ENCODE measurements at regions of chr3 and their contacts with region 1.

Region 1: GRCh38 chr3:183381179-183381578 is 47.2 kb downstream of the MCF2L2 start:
- DNase-seq: no peak
- H3K4me3 ChIP-seq: no peak overlapping the region
- H3K27ac ChIP-seq: no peak overlapping the region
- H3K4me1 ChIP-seq: no peaks in the 10 kb centered on the region
- H3K27me3 ChIP-seq: peaks cover 10% of the 10 kb centered on the region
- CTCF ChIP-seq: no peak

Region 2: DNA sequence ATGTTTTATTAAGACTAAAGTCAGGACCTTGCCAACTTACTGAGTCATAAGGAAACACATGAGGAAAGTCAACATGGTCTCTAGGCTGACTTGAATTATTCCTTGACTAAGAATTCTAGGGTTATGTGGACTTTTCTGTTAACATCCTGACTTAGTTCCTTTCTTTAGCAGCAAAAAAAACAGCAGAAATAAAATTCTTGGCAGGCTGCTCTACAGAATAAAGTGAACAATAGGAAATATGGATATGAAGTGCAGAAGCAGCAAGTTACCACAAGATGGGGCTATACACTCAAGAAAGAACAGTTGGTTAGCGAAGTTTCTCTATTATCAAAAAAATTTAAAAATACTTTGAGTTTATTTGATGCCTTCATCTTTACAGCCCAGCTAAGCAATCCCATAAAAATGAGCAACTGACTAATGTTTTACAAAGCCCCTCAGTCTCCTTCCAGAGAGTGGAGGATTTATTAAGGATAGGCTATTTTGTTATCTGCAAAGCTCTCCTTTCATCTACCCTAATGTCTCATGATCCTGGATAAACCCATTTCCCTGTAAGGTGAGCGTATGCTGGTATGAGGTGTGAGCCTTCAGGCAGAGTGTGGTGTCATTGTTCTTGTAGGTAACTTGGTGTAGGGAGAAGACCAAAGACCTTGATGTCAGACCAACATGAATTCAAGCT is 258.8 kb before region 1 on chr3:
- intact Hi-C with region 1: loop called (anchors 5 kb)
- DNase-seq: no peak
- H3K4me3 ChIP-seq: no peak overlapping the region
- H3K27ac ChIP-seq: no peak overlapping the region
- H3K4me1 ChIP-seq: peaks cover 5% of the 10 kb centered on the region
- H3K27me3 ChIP-seq: peaks cover 29% of the 10 kb centered on the region
- CTCF ChIP-seq: peak; percentile 90

Region 3: GRCh38 chr3:183178629-183179549 is 202.3 kb before region 1 on chr3:
- intact Hi-C with region 1: loop called (anchors 1 kb)
- DNase-seq: peak; percentile 29
- H3K4me3 ChIP-seq: peak overlapping the region; percentile 66
- H3K27ac ChIP-seq: no peak overlapping the region
- H3K4me1 ChIP-seq: peaks cover 22% of the 10 kb centered on the region
- H3K27me3 ChIP-seq: peaks cover 73% of the 10 kb centered on the region
- CTCF ChIP-seq: peak; percentile 16

Measured in left ventricle myocardium inferior (tissue), 1 donor.